Activated B cell treated with CpG ODN at 0.5 μM for 24 hours (primary cell): ENCODE measurements at regions of chr10 and their contacts with region 1.

Region 1: DNA sequence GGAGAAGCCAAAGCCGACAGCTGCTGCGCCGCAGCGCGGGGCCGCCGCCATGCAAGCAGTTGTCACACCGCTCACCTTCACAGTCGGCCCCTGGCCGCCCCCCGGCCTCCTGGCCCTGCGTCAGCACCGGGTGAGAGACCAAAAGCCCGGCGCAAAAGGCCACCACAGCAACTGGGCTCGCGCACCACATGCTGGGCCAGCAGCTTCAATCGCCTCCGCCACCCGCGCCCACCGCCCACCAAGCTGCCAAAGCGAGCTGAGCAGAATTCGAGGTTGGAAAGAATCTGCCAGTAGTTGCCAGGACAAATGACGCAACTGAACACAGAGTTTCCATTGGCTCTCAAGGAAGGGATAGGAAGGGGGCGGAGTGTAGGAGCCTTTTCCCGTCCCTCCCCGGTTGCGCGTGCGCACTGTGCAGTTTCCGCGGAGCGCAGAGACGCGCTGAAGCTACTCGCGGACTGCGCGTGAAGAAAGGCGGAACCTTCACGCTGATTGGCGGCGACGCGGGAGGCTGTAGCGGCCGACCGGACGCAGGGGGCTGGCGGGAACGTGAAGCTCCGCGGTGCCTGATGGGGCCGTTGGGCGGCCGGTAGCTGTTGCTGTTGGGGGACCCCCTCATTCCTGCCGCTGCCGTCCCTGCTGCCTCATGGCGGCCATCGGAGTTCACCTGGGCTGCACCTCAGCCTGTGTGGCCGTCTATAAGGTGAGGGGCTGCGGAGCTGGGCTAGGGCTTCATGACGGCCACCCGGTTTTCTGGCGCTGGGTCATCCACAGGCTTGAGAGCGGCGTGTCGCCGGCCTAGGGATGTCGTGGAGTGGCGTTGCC is at the starts of genes CDNF, HSPA14 and MSANTD7:
- DNase-seq: peak; percentile 97
- ATAC-seq: peak; percentile 96
- H3K4me3 Mint-ChIP-seq: peak within 1 kb of the TSS; percentile 95
- H3K27ac Mint-ChIP-seq: peak within 1 kb of the TSS; percentile 91
- H3K4me1 Mint-ChIP-seq: peaks cover 25% of the 10 kb centered on the region
- H3K27me3 Mint-ChIP-seq: no peaks in the 10 kb centered on the region
- CTCF ChIP-seq: no peak
- total RNA-seq, gene CDNF: 0.49 and 0.98 TPM in 2 replicates
- total RNA-seq, gene HSPA14: 16.7 and 20.4 TPM in 2 replicates
- total RNA-seq, gene MSANTD7: 14.9 and 16.5 TPM in 2 replicates

Region 2: DNA sequence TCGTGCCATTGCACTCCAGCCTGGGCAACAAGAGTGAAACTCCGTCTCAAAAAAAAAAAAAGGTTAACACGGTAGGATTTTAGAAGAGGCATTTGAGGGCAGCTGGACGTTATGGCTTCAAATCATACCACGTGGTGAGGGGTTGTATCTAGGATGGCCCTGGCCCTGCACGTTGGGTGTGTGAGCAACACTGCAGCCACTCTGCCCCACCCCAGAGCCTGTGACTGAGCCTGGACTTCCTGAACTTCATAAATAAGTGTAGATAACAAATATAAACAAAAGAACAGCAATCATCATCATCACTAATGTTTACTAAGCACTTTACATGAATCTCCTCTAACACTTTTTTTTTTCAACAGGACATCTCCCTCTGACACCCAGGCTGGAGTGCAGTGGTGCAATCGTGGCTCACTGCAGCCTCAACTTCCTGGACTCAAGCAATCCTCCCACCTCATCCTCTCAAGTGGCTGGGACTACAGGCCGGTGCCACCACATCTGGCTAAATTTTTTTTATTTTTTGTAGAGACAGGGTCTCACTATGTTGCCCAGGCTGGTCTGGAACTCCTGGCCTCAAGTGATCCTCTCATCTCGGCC is 337.7 kb before region 1 on chr10:
- CTCF ChIA-PET with region 1: no interaction called
- POLR2A ChIA-PET with region 1: no interaction called
- intact Hi-C with region 1: loop called (anchors 5 kb)
- DNase-seq: no peak
- ATAC-seq: no peak
- H3K4me3 Mint-ChIP-seq: no peak overlapping the region
- H3K27ac Mint-ChIP-seq: no peak overlapping the region
- H3K4me1 Mint-ChIP-seq: peaks cover 18% of the 10 kb centered on the region
- H3K27me3 Mint-ChIP-seq: no peaks in the 10 kb centered on the region
- CTCF ChIP-seq: no peak

Region 3: GRCh38 chr10:14543046-14543903 is 294.7 kb before region 1 on chr10:
- CTCF ChIA-PET with region 1: no interaction called
- POLR2A ChIA-PET with region 1: no interaction called
- intact Hi-C with region 1: no loop called
- DNase-seq: no peak
- ATAC-seq: peak; percentile 63
- H3K4me3 Mint-ChIP-seq: peak overlapping the region; percentile 53
- H3K27ac Mint-ChIP-seq: peak overlapping the region; percentile 75
- H3K4me1 Mint-ChIP-seq: peaks cover 76% of the 10 kb centered on the region
- H3K27me3 Mint-ChIP-seq: no peaks in the 10 kb centered on the region
- CTCF ChIP-seq: no peak

Region 4: DNA sequence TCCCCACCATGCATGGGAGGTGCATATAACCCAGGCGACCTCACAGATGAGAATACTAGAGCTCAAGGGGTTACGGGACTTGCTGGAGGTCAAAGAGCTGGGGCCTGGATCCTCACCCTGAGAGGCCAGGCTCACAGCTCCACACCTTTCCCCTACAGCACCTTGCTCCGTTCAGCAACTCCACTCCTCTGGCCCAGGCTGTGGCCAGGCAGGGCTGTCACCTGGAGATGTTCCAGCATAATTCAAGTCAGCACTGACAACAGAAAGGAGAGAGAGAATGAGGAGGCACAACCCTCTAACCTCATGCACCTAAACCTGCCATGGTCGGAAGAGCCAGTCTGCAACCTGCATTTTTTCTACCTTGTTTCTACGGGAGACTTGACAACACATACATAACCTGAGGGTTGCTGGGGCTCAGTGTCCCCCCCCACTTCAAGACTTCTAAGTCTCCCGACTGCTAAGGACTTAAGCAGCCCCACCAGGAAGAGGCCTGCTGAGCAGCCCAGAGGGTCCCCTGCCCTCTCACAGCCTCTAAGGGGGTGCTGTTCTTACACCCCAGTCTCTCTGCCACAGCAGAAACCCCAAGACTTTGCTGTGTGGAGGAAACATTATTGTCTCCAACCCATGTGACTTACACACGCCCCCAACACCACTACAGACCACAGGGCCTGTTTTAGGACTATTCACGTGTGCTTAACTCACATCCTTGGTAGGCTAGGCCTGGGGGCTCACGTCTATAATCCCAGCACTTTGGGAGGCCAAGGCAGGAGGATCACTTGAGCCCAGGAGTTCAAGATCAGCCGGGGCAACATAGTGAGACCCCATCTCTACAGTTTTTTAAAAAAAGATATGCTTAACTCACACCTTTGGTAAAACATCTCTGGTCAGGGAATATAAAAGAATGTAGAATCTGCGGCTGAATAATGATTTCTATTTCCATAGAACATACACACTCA is 238.9 kb before region 1 on chr10:
- CTCF ChIA-PET with region 1: no interaction called
- POLR2A ChIA-PET with region 1: interaction called, 11 read pairs
- intact Hi-C with region 1: loop called (anchors 1 kb)
- DNase-seq: no peak
- ATAC-seq: no peak
- H3K4me3 Mint-ChIP-seq: peak overlapping the region; percentile 29
- H3K27ac Mint-ChIP-seq: peak overlapping the region; percentile 75
- H3K4me1 Mint-ChIP-seq: peaks cover 76% of the 10 kb centered on the region
- H3K27me3 Mint-ChIP-seq: no peaks in the 10 kb centered on the region
- CTCF ChIP-seq: no peak

Region 5: GRCh38 chr10:14736600-14737081 is 101.3 kb before region 1 on chr10:
- CTCF ChIA-PET with region 1: interaction called, 3 read pairs
- POLR2A ChIA-PET with region 1: interaction called, 4 read pairs
- intact Hi-C with region 1: loop called (anchors 2 kb)
- DNase-seq: no peak
- ATAC-seq: peak; percentile 76
- H3K4me3 Mint-ChIP-seq: peak overlapping the region; percentile 73
- H3K27ac Mint-ChIP-seq: peak overlapping the region; percentile 98
- H3K4me1 Mint-ChIP-seq: peaks cover 76% of the 10 kb centered on the region
- H3K27me3 Mint-ChIP-seq: no peaks in the 10 kb centered on the region
- CTCF ChIP-seq: no peak

Region 6: DNA sequence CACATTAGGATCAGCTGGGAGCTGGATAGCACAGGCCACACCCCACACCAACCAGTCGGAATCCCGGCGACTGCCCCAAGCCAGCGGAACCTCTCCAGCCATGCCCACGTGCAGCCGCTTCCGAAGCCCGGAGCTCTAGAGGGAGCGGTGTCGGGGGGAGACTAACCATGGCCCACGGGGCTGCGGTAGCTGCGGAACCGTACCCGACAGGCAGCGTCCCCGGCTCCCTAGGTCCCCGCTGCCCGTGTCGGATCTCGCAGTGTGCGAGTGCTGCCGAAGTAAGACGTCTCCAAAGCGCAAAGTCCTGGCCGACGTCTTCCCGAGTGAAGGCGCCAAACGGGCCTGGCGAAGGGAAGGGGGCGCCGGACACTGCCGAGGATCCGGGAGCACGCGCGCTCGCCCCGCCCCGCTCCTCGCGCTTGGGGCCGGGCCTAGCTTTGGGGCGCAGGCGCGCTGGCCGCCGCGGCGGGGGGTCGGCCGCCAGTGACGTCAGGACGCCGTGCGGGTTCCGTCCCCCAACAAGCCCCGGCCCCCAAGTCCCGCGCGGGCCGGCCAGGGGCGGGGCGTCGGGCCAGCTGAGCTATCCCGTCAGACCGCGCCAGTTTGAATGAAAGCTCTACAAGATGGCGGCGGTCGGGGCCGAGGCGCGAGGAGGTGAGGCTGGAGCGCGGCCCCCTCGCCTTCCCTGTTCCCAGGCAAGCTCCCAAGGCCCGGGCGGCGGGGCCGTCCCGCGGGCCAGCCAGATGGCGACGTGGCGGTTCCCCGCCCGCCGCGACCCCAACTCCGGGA is 40.5 kb after region 1 on chr10 and contains the start of gene SUV39H2:
- CTCF ChIA-PET with region 1: interaction called, 4 read pairs
- POLR2A ChIA-PET with region 1: interaction called, 27 read pairs
- intact Hi-C with region 1: loop called (anchors 1 kb)
- DNase-seq: peak; percentile 93
- ATAC-seq: peak; percentile 93
- H3K4me3 Mint-ChIP-seq: peak within 1 kb of the TSS; percentile 94
- H3K27ac Mint-ChIP-seq: peak within 1 kb of the TSS; percentile 86
- H3K4me1 Mint-ChIP-seq: peaks cover 25% of the 10 kb centered on the region
- H3K27me3 Mint-ChIP-seq: no peaks in the 10 kb centered on the region
- CTCF ChIP-seq: no peak
- total RNA-seq, gene SUV39H2: 7.4 and 8.1 TPM in 2 replicates

Region 7: GRCh38 chr10:14971867-14972448 is 134.0 kb after region 1 on chr10:
- CTCF ChIA-PET with region 1: interaction called, 10 read pairs
- POLR2A ChIA-PET with region 1: no interaction called
- intact Hi-C with region 1: loop called (anchors 5 kb)
- DNase-seq: no peak
- ATAC-seq: peak; percentile 70
- H3K4me3 Mint-ChIP-seq: no peak overlapping the region
- H3K27ac Mint-ChIP-seq: no peak overlapping the region
- H3K4me1 Mint-ChIP-seq: peaks cover 5% of the 10 kb centered on the region
- H3K27me3 Mint-ChIP-seq: peaks cover 6% of the 10 kb centered on the region
- CTCF ChIP-seq: peak; percentile 39

Region 8: GRCh38 chr10:15072358-15072757 is 234.4 kb after region 1 on chr10:
- CTCF ChIA-PET with region 1: no interaction called
- POLR2A ChIA-PET with region 1: no interaction called
- intact Hi-C with region 1: no loop called
- DNase-seq: no peak
- ATAC-seq: no peak
- H3K4me3 Mint-ChIP-seq: no peak overlapping the region
- H3K27ac Mint-ChIP-seq: no peak overlapping the region
- H3K4me1 Mint-ChIP-seq: no peaks in the 10 kb centered on the region
- H3K27me3 Mint-ChIP-seq: peaks cover 6% of the 10 kb centered on the region
- CTCF ChIP-seq: no peak